MCF 10A (cell line): ENCODE measurements at regions of chr5 and their contacts with region 1.

Region 1: DNA sequence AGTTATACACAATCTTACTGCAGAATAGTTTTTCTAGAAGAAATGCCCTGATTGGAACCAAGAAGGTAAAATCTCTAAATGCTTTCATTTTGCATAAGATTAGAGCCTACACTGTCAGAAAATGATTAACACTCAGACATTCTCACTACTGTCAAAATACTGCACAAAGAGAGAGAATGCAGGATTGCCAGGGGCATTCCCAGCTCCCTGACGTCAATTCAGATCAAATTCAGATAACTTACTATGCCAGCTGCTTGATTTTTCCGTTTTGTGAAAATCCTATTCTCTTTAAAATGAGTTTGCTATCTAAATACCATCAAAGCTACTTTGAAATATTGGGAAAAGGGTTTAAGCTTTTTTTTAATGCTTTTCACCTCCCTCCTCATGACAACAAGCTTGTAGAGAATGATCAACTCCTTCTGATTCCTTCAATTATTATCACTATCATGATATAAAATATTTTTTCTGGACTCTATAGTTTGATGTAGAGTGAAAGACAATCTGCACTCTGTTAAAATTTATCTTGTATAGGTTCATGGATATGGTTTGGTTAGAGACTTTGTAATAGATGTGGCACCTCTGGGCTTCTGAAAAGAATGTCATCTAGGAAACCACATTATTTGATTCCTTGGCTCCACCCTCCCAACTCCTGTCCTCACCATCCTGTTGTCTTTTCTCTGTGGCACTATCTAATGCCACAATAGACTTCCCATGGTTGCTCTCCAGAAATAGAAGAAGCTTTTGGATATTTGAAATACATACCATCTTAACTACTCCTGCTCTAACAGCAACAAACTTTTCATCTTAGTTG is 407.7 kb downstream of the PDE4D start:
- DNase-seq: peak; percentile 57
- H3K4me3 Mint-ChIP-seq: peak overlapping the region; percentile 12
- H3K27ac Mint-ChIP-seq: peak overlapping the region; percentile 42
- H3K4me1 Mint-ChIP-seq: peaks cover 30% of the 10 kb centered on the region
- H3K27me3 Mint-ChIP-seq: no peaks in the 10 kb centered on the region
- CTCF ChIP-seq: no peak

Region 2: GRCh38 chr5:59193616-59194319 is 292.1 kb before region 1 on chr5:
- CTCF ChIA-PET with region 1: no interaction called
- POLR2A ChIA-PET with region 1: no interaction called
- intact Hi-C with region 1: loop called (anchors 5 kb)
- DNase-seq: peak; percentile 98
- H3K4me3 Mint-ChIP-seq: peak overlapping the region; percentile 55
- H3K27ac Mint-ChIP-seq: peak overlapping the region; percentile 100
- H3K4me1 Mint-ChIP-seq: peaks cover 31% of the 10 kb centered on the region
- H3K27me3 Mint-ChIP-seq: no peaks in the 10 kb centered on the region
- CTCF ChIP-seq: no peak